A549 (cell line): ENCODE measurements at regions of chr6 and their contacts with region 1.

Region 1: DNA sequence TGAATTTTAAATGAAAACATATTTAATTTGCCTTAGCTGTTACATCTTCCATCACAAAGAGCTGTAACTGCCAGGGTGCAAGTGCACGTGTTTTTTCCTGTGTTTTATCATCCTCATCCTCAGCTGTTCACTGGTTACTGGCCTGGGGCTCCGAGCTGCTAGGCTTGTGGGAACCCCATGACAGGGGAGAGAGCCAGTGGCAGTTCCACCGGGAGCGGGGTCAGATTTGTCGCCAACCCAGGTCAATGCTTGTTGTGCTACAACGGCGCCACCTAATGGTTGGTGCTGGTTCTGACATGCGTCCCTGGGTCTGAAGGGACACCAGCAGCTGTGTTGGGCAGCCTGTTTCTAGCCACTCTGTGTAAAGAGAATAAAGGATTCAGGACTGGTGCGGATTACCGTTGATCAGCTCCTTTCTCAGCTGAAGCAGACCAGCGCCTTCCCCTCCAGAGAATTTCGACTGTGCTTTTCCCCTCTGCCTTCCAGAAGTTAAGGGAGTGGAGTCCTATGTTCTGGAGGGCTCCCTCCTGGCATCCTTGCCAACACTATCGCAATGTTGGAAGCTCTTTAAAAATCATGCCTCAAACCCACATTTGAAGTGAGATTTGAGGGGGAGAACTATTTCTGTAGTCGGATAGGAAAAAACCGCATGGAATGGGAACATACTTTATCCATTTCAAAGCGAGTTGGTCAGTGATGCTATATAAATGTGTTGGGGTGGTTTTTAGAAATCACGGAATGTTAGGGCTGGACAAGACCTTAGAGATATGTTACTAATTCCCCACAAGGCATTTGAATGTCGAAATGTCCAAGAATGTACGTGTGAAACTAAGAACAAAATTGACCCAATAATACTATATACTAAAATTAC is 32.1 kb downstream of the SUMO4 start:
- DNase-seq: peak; percentile 79 to 80
- ATAC-seq: peak; percentile 96 to 98
- H3K4me3 ChIP-seq: no peak overlapping the region
- H3K27ac ChIP-seq: peak overlapping the region; percentile 48 to 69
- H3K4me1 ChIP-seq: 0 out of 3 replicates have a peak, but pooled peaks cover 3% of the 10 kb centered on the region
- CTCF ChIP-seq: peak; percentile 84
- EP300 ChIP-seq: no peak
- POLR2A ChIP-seq: no peak
- RAD21 ChIP-seq: peak; percentile 96 to 97

Region 2: GRCh38 chr6:148559848-148560433 is 872.2 kb before region 1 on chr6:
- CTCF ChIA-PET with region 1: interaction called, 11 read pairs
- POLR2A ChIA-PET with region 1: no interaction called
- DNase-seq: peak; percentile 44 to 52
- ATAC-seq: peak; percentile 91 to 95
- H3K4me3 ChIP-seq: peak overlapping the region; percentile 37
- H3K27ac ChIP-seq: peak overlapping the region; percentile 45 to 86; a peak in 5 of 6 replicates
- H3K4me1 ChIP-seq: no peaks in the 10 kb centered on the region
- CTCF ChIP-seq: peak; percentile 80
- EP300 ChIP-seq: no peak
- POLR2A ChIP-seq: no peak
- RAD21 ChIP-seq: peak; percentile 65 to 83

Region 3: DNA sequence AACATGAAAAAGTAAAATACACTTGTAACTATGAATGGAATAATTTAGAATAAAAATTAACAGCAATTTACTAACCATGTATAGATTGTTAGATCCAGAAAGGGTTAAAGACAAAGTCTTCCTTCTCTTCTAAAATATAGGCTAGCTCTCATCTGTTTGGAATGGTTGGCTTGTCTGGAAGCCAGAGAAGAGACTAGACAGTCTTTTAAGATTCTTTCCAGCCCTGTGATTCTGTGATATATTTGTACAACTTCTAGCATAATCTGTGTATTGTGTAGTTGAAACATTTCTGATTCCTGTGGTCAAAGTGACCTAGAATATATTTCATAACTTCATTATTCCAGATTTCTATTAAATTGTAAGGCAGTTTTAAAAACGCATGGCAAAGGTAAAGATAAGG is 488.7 kb before region 1 on chr6:
- CTCF ChIA-PET with region 1: no interaction called
- POLR2A ChIA-PET with region 1: no interaction called
- DNase-seq: no peak
- ATAC-seq: no peak
- H3K4me3 ChIP-seq: no peak overlapping the region
- H3K27ac ChIP-seq: no peak overlapping the region
- H3K4me1 ChIP-seq: no peaks in the 10 kb centered on the region
- CTCF ChIP-seq: no peak
- EP300 ChIP-seq: no peak
- POLR2A ChIP-seq: no peak
- RAD21 ChIP-seq: no peak

Region 4: DNA sequence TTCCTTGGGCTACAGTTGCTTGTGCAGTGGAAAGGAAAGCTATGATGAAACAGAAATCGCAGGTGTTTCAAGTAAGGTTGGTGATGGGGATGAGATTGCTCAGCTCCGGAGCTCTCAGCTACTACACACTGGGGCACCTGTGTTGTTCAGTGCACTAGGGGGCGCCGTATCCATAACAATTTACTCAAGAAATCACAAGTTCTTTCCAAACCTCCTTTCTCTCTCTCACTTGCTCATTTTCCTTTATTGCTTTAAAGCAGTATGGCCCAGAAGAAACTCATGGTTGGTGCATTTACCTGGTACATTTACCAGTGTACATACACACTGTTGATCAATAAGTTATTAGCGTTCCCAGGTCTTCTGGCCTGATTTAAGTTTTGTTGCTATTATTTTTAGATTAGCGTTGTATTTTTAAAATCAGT is 349.8 kb before region 1 on chr6:
- CTCF ChIA-PET with region 1: interaction called, 39 read pairs
- POLR2A ChIA-PET with region 1: no interaction called
- DNase-seq: peak; percentile 47 to 73
- ATAC-seq: peak; percentile 88 to 94
- H3K4me3 ChIP-seq: no peak overlapping the region
- H3K27ac ChIP-seq: no peak overlapping the region; a peak in 2 of 6 replicates
- H3K4me1 ChIP-seq: peaks cover 20% of the 10 kb centered on the region; the same call in 2 of the 3 replicates
- CTCF ChIP-seq: peak; percentile 56
- EP300 ChIP-seq: no peak
- POLR2A ChIP-seq: no peak
- RAD21 ChIP-seq: peak; percentile 84 to 87

Region 5: GRCh38 chr6:149335924-149336608 is 96.1 kb before region 1 on chr6:
- CTCF ChIA-PET with region 1: interaction called, 11 read pairs
- POLR2A ChIA-PET with region 1: no interaction called
- DNase-seq: peak in 1 of 2 experiments; percentile 69
- ATAC-seq: peak; percentile 70 to 82; a peak in 4 of 6 replicates
- H3K4me3 ChIP-seq: no peak overlapping the region
- H3K27ac ChIP-seq: peak overlapping the region; percentile 68 to 84
- H3K4me1 ChIP-seq: peaks cover 86% of the 10 kb centered on the region
- CTCF ChIP-seq: no peak
- EP300 ChIP-seq: no peak
- POLR2A ChIP-seq: no peak
- RAD21 ChIP-seq: no peak

Region 6: GRCh38 chr6:149419696-149420404 is 12.3 kb before region 1 on chr6:
- CTCF ChIA-PET with region 1: interaction called, 11 read pairs
- POLR2A ChIA-PET with region 1: no interaction called
- DNase-seq: no peak
- ATAC-seq: no peak
- H3K4me3 ChIP-seq: no peak overlapping the region
- H3K27ac ChIP-seq: no peak overlapping the region
- H3K4me1 ChIP-seq: no peaks in the 10 kb centered on the region
- CTCF ChIP-seq: no peak
- EP300 ChIP-seq: no peak
- POLR2A ChIP-seq: no peak
- RAD21 ChIP-seq: no peak

Region 7: DNA sequence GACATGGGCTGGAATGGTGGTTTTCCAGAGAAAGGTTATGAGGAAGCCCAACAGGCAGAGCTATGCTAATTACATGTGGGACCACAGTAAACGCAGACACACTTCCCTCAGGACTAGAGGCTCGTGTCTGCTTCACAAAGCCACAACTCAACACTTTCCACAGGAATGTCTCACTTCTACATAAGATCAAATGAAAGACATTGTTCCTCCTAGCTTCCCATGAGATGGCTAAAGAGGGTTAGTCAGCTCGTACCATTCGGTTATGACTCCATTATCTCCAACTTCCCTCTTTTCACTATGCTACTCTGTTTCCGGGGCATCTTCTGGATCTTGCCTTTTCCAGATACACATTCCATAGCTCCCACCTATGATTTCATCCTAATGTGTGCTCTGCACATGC is 81.8 kb after region 1 on chr6:
- CTCF ChIA-PET with region 1: interaction called, 14 read pairs
- POLR2A ChIA-PET with region 1: no interaction called
- DNase-seq: no peak
- ATAC-seq: no peak
- H3K4me3 ChIP-seq: no peak overlapping the region
- H3K27ac ChIP-seq: no peak overlapping the region
- H3K4me1 ChIP-seq: no peaks in the 10 kb centered on the region
- CTCF ChIP-seq: no peak
- EP300 ChIP-seq: no peak
- POLR2A ChIP-seq: no peak
- RAD21 ChIP-seq: no peak